GM18951 (cell line): ENCODE measurements at regions of chr13 and their contacts with region 1.

Region 1: DNA sequence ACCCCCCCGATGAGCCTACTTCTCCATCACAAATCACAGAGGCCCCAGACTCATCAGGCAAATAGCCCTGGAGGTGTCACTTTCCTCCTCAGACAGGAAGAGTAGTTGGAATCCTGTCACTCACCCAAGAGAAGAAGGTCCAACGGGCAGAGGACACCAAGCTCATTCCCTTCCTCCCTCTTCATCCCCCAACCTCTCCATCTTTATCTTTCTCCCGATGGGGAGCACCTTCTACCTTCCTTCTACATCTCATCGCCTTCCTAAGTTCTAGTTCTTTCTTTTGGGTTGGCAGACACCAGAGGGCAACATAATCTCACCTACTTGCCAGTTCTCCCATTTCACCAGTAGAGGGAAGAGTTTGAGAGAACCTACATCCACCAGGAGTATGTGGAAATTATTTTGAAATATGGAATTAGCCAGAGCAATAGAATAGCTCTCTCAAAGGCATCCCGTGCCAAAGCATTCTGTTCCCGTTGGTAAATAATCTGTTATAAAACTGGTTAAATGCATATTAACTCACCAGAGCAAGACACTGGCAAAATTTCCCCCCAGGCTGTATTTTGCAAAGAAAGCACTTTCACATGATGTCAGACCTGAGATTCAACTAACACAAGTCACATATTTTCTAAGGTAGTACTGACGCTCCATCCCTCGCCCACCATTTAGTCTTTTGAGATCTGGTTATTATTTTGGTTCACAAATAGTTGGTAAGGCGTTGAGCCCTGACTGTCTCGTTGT is 55.0 kb downstream of the ZIC5 start:
- POLR2A ChIP-seq: no peak

Region 2: DNA sequence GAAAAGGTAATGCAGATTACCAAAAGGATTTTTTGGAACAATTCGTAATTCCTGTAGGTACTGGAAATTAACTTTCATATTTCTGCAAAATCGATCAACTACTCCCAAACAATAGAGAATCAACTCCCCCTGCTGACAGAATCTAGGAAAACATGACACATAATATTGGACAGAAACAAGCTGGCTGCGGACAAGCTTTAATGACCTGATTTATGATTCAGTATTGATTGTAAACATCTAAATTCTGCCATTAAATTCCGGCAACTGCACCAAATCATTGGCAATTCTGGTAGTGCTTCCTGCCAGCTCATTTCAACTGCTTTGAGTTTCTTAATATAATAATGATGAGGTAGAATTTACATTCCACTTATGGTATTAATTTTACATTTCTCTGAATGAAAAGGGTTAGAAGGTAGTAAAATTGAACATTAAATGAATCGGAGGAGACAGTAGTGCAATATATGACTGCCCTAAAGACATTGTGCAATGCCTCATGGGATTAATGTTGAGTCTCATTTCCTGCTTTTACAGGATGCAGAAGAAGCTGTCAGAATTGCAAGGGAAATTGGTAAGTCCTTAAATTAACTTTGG is 318.9 kb after region 1 on chr13:
- in situ Hi-C with region 1: loop called (anchors 25 kb)
- POLR2A ChIP-seq: no peak

Region 3: GRCh38 chr13:100514788-100515409 is 598.4 kb after region 1 on chr13:
- in situ Hi-C with region 1: loop called (anchors 25 kb)
- POLR2A ChIP-seq: no peak